ENCODE measurements at regions of chr3 and their contacts with region 1.

Region 1: DNA sequence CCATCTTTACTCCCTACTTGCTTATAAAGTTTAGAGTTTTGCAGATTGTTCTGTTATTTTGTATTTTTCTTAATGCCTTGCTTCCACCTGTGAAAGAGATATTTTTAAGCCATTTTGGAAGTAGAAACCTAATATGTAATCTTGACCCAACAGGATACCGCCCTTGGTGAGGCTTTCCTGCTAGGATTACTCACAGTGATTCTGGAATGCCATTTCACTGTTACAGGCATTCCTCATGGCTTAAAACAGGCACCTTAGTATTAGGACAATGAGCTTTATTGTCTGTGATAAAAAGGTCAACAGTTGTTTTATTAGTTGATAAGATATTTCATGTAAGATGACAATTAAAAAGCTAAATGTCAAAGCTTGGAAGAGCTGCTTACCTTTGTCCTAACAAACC is 58.2 kb downstream of the PHLDB2 start:
- DNase-seq: peak; percentile 95
- ATAC-seq: peak; percentile 91
- H3K4me3 ChIP-seq: no peak overlapping the region
- H3K27ac ChIP-seq: peak overlapping the region; percentile 96
- H3K4me1 ChIP-seq: peaks cover 73 to 94% of the 10 kb centered on the region in 2 experiments
- H3K27me3 ChIP-seq: no peaks in the 10 kb centered on the region
- CTCF ChIP-seq: no peak
- POLR2A ChIP-seq: no peak
- RAD21 ChIP-seq: no peak

Region 2: DNA sequence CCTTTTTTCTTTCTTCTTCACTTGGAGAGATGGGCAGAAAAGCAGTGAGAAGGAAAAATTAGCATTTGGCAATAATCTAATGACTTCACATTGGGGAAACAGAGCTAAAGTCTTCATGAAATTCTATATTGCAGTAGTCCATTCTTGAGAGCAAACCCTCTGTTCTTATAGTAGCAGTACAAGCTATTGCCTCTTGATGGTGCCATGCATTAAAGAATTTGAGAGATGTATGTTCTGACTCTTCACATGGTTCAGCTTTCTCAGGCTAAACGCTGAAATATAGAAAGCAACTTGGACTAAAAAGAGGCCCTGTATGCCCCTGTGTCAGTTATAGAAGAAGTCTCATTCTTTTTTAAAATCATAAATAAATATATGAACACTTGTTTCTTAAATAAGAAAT is 22.2 kb before region 1 on chr3:
- CTCF ChIA-PET with region 1: interaction called, 4 read pairs
- POLR2A ChIA-PET with region 1: interaction called, 26 read pairs
- RAD21 ChIA-PET with region 1: no interaction called
- intact Hi-C with region 1: no loop called
- DNase-seq: peak; percentile 75
- ATAC-seq: peak; percentile 82
- H3K4me3 ChIP-seq: no peak overlapping the region
- H3K27ac ChIP-seq: peak overlapping the region; percentile 58
- H3K4me1 ChIP-seq: peaks cover 23 to 73% of the 10 kb centered on the region in 2 experiments; a peak in 3 of 4 replicates
- H3K27me3 ChIP-seq: no peaks in the 10 kb centered on the region
- CTCF ChIP-seq: peak in 2 of 3 experiments; percentile 64 to 81; a peak in 4 of 6 replicates
- POLR2A ChIP-seq: no peak
- RAD21 ChIP-seq: no peak

Region 3: DNA sequence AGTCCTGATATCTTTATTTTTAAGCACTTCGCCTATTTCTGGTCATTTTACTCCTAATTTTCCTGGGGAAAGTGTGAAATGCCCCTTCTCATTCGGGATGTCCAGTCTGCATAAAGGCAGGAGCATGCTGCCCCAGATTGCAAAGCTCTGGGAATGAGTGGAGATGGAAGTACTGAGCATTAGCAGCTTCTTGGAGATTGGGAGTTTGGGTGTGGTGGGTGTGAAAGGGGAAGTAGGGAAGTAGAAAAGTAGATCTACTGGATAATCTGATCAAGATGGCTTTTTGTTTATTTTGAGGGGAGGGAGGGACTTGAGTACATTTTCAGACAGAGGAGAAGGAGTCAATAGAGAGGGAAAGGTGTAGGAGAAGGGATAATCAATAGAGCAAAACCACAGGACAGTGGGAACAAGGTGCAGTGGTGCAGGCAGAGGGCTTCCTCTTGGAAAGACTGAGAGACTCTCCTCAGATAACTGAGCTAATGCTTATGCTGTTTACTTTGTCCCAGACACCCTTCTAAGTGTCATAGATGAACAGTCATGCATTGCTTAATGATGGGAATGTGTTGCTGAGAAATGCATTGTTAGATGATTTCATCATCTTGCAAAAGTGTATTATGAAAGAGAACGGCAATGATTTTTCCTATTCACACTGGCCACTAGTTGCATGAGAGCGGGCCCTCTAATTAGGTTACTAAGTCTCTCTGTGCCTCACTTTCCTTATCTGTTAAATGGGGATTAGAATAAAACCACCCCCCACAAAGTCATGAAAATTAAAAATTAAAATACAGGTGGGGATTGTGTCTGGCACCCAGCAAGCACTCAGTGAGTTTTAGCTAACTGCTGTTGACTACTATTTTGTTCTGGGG is 12.7 kb before region 1 on chr3:
- CTCF ChIA-PET with region 1: no interaction called
- POLR2A ChIA-PET with region 1: interaction called, 152 read pairs
- RAD21 ChIA-PET with region 1: no interaction called
- intact Hi-C with region 1: loop called (anchors 1 kb)
- DNase-seq: peak; percentile 89
- ATAC-seq: peak; percentile 29
- H3K4me3 ChIP-seq: no peak overlapping the region
- H3K27ac ChIP-seq: peak overlapping the region; percentile 96
- H3K4me1 ChIP-seq: peaks cover 44 to 100% of the 10 kb centered on the region in 2 experiments
- H3K27me3 ChIP-seq: no peaks in the 10 kb centered on the region
- CTCF ChIP-seq: peak in 1 of 3 experiments; percentile 26; a peak in 2 of 6 replicates
- POLR2A ChIP-seq: no peak
- RAD21 ChIP-seq: no peak

Region 4: GRCh38 chr3:111929484-111929883 is 12.2 kb after region 1 on chr3:
- CTCF ChIA-PET with region 1: no interaction called
- POLR2A ChIA-PET with region 1: interaction called, 26 read pairs
- RAD21 ChIA-PET with region 1: interaction called, 3 read pairs
- intact Hi-C with region 1: no loop called
- DNase-seq: no peak
- ATAC-seq: peak; percentile 57
- H3K4me3 ChIP-seq: no peak overlapping the region
- H3K27ac ChIP-seq: peak overlapping the region; percentile 96
- H3K4me1 ChIP-seq: peaks cover 74 to 98% of the 10 kb centered on the region in 2 experiments
- H3K27me3 ChIP-seq: no peaks in the 10 kb centered on the region
- CTCF ChIP-seq: no peak
- POLR2A ChIP-seq: peak; percentile 30
- RAD21 ChIP-seq: no peak

Region 5: DNA sequence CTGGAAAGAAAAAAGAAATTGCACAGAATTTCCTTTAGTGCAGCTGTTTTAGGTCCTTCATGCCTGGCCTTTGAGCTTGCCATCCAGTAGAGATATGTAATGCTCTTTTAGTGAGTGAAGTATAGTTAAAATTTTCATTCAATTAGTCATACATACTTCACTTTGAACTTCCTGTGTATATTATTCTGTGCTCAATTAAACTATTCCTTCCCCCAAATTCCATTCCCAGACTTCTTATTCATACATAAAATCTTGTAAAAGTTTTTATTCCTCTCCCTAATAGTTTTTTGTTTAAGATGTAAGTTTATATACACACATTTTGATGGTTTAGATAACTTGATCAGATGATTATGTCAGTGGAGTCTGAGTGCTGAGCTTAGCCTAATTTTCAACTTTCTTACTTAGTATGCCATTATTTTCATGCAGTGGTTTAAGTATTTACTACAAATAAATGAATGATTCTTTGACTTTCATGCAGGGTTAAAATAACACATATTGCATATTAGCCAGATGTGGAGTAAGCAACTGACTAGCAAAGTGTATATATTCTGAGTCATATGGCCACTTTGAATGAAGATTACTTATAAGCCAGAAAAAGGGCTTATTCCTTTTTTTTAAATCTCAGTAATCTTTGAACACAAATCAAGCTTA is 19.0 kb after region 1 on chr3:
- CTCF ChIA-PET with region 1: interaction called, 3 read pairs
- POLR2A ChIA-PET with region 1: interaction called, 30 read pairs
- RAD21 ChIA-PET with region 1: interaction called in 1 of 2 experiments, 3 read pairs
- intact Hi-C with region 1: no loop called
- DNase-seq: peak; percentile 60
- ATAC-seq: peak; percentile 78
- H3K4me3 ChIP-seq: peak overlapping the region in 1 of 2 experiments; percentile 0; a peak in 1 of 4 replicates
- H3K27ac ChIP-seq: peak overlapping the region; percentile 96
- H3K4me1 ChIP-seq: peaks cover 66 to 78% of the 10 kb centered on the region in 2 experiments
- H3K27me3 ChIP-seq: no peaks in the 10 kb centered on the region
- CTCF ChIP-seq: no peak
- POLR2A ChIP-seq: no peak
- RAD21 ChIP-seq: 0 out of 2 replicates have a peak, but pooled peaks have one; percentile 2

Region 6: GRCh38 chr3:112416391-112417212 is 499.3 kb after region 1 on chr3:
- CTCF ChIA-PET with region 1: no interaction called
- POLR2A ChIA-PET with region 1: no interaction called
- RAD21 ChIA-PET with region 1: no interaction called
- intact Hi-C with region 1: no loop called
- DNase-seq: no peak
- ATAC-seq: no peak
- H3K4me3 ChIP-seq: no peak overlapping the region
- H3K27ac ChIP-seq: no peak overlapping the region
- H3K4me1 ChIP-seq: no peaks in the 10 kb centered on the region
- H3K27me3 ChIP-seq: no peaks in the 10 kb centered on the region
- CTCF ChIP-seq: no peak
- POLR2A ChIP-seq: no peak
- RAD21 ChIP-seq: no peak